H1 (cell line): ENCODE measurements at regions of chr3 and their contacts with region 1.

Region 1: DNA sequence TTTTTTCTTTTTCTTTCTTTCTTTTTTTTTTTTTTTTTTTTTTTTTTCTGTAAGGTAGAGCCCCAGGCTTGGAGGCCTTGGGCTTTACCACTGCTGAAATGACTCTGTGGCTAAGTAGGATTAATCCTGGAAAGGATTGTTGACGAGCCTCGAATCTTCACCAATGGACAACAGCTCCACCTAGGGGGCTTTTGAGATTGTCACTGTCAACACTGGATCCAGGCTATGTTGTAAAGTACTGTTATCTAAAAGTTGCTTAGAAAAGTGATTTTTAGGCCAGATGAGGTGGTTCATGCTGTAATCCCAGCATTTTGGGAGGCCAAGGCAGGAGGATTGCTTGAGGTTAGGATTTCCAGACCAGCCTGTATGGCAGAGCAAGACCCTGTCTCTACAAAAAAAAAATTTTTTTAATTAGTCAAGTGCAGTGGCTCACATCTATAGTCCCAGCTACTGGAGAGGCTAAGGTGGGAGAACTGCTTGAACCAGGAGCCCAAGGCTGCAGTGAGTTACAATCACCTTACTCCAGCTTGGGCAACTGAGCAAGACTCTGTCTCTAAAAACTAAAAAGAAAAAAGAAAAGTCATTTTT is 41.6 kb downstream of the KLHL18 start:
- DNase-seq: peak; percentile 29 to 75
- H3K4me3 ChIP-seq: no peak overlapping the region
- H3K27ac ChIP-seq: no peak overlapping the region
- H3K4me1 ChIP-seq: no peaks in the 10 kb centered on the region
- H3K27me3 ChIP-seq: no peaks in the 10 kb centered on the region
- CTCF ChIP-seq: peak; percentile 26 to 78 (median 73)
- EP300 ChIP-seq: no peak
- POLR2A ChIP-seq: no peak
- RAD21 ChIP-seq: peak; percentile 89 to 91

Region 2: DNA sequence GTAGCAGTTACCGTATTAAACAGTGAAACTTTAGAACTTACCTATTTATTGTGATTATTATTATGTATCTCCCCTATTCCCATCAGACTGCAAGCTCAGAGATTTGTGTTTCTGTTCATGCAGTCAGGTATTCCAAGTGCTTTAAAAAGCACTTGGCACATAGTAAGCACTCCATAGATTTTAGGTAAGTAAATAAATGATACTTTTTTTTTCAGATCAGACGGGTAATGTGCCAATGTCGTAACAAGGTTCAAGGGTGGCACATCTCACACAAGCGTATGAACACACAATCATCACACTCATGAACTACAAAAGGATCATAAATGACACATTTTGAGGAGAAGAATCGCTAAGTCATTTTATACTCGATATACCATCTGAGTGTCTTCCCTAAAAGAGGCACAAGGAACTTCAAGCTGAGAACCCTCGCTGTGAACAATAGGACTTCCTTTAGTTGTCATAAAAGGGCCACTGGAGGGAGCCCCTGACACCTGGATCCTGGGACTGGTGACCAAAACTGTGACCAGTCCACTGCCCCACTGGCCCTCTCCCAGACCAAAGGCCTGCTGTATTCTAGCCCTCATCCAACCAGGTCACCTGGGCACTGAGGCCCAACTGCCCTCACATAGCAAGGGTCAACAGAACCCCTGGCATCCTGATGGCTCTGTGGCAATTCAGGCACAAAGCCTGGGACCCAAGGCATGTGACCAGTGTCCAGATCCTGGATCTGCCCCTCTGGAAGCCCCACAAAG is 73.9 kb before region 1 on chr3:
- CTCF ChIA-PET with region 1: interaction called, 59 read pairs
- POLR2A ChIA-PET with region 1: no interaction called
- DNase-seq: no peak
- H3K4me3 ChIP-seq: no peak overlapping the region
- H3K27ac ChIP-seq: no peak overlapping the region
- H3K4me1 ChIP-seq: no peaks in the 10 kb centered on the region; a peak in 1 of 7 replicates
- H3K27me3 ChIP-seq: no peaks in the 10 kb centered on the region
- CTCF ChIP-seq: peak; percentile 7 to 53 (median 49)
- EP300 ChIP-seq: no peak
- POLR2A ChIP-seq: no peak
- RAD21 ChIP-seq: peak; percentile 56 to 70

Region 3: DNA sequence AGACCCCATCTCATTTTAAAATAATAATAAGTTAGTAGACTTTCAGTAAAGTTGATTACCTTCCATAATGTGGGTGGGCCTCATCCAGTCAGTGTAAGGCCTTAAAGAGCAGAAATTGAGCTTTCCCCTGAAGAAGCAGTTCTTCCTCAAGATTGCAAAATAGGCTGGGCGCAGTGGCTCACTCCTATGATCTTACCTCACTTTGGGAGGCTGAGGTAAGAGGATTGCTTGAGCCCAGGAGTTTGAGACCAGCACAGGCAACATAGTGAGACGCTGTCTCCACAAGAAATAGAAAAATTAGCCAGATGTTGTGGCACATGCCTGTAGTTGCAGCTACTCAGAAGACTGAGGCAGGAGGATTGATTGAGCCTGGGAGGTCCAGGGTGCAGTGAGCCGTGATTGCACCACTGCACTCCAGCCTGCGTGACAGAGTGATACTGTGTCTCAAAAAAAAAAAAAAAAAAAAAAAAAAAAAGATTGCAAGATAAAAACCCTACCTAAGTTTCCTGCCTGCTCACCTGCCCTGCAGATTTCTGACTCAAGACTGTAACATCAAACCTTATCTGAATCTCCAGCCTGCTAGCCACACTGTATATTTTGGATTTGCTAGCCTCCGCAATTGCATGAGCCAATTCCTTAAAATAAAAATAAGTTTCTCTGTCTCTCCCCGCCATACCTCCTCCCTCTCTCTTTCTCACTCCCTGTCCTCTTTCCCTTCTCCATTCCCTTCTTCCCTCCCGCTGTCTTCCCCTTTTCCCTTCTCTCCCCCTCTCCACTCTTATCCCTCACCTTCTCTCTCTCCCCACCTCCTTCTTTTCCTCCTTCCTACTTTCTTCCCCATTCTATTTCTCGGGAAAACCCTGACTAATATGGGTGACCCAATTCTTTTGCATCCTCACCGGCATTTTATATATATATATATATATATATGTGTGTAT is 24.7 kb before region 1 on chr3:
- CTCF ChIA-PET with region 1: interaction called, 11 read pairs
- POLR2A ChIA-PET with region 1: no interaction called
- DNase-seq: no peak
- H3K4me3 ChIP-seq: no peak overlapping the region
- H3K27ac ChIP-seq: no peak overlapping the region
- H3K4me1 ChIP-seq: no peaks in the 10 kb centered on the region; a peak in 1 of 7 replicates
- H3K27me3 ChIP-seq: no peaks in the 10 kb centered on the region
- CTCF ChIP-seq: no peak
- EP300 ChIP-seq: no peak
- POLR2A ChIP-seq: no peak
- RAD21 ChIP-seq: no peak

Region 4: DNA sequence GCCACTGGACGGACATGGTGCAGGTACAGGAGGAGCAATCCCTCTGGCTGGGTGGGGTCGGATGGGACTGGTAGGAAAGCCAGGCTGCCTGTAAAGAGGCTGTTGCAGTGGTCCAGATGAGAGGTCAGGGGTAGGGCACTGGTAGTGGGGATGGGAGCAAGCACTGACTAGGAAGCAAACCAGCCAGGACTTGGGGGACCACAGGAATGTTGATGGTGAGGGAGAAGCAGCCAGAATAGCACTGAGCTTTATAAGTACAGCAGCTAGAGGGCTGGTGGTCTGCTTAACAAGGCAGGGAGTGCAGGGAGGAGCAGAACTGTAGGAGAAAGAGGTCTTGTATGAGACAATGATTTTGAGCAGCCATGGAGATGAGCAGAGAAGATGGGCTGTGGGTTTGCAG is 17.8 kb after region 1 on chr3:
- CTCF ChIA-PET with region 1: interaction called, 18 read pairs
- POLR2A ChIA-PET with region 1: no interaction called
- DNase-seq: no peak
- H3K4me3 ChIP-seq: no peak overlapping the region
- H3K27ac ChIP-seq: no peak overlapping the region
- H3K4me1 ChIP-seq: no peaks in the 10 kb centered on the region; a peak in 2 of 7 replicates
- H3K27me3 ChIP-seq: no peaks in the 10 kb centered on the region
- CTCF ChIP-seq: no peak
- EP300 ChIP-seq: no peak
- POLR2A ChIP-seq: no peak
- RAD21 ChIP-seq: no peak